Left colon (tissue), 2 donors: ENCODE measurements at regions of chr18 and their contacts with region 1.

Region 1: GRCh38 chr18:54224379-54225014 is at the start of gene MBD2:
- DNase-seq: peak; percentile 95 to 96
- ATAC-seq: peak; percentile 97
- total RNA-seq, gene MBD2: 109 to 115 TPM

Region 2: DNA sequence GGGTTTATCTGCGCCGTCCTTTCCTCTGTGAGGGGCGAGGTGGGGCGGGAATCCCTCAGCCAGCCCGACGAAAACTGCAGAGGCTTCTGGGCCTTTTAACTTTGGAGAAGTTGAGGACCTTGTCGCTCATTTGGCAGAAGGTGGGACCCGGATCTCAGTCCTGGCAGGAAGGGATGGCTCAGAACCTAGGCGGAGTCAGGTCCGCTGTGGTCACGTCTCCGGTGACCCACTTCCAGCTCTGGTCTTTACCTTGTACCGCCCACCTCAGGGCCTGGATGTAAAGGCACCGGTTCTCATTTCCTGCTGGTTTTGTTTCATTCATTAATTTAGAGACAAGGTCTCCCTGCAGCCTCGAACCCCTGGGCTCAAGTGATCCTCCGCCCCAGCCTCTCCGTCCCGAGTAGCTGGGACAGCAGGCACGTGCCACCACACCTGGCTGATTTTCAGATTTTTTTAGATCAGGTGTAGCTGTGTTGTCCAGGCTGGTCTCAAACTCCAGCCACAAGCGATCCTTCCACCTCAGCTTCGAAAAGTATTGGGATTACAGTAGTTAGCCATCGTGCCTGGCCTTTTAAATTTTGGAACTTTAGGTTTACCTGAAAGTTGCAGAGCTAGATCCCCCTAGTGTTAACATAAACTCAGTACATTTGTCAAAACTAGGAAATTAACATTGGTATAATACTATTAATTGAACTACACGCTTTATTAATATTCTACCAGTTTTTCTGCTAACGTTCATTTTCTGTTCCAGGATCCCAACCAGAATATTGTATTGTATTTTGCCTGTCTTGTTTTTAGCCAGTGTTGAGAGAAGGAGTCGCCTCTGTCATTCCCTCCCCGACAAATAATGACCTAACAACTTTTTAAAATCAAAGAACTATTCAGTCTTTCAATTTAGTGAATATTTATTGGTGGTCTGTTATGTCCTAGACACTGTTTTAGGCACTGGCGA is 45.7 kb after region 1 on chr18:
- intact Hi-C with region 1: loop called in 1 of 2 experiments (anchors 5 kb)
- DNase-seq: peak; percentile 61 to 66
- ATAC-seq: peak; percentile 42

Region 3: DNA sequence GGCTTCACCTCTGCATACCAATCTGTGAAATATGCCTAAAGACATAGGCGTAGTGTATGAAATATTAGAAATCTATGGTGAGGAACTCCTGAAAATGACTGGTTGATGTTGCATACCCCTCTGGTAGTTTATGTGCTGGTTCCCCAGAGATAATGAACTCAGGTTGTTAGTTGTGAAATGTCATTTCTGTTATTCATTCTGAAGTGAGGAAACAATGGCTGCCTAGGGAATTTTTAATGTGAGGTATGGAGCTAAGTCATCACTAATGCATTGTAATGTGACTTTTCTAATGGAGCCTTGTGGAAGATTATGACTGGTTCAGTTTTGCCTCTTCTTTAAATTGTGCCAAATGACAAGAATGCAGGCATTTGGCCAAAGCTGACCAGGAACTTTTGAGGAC is 542.1 kb after region 1 on chr18:
- intact Hi-C with region 1: no loop called
- DNase-seq: no peak
- ATAC-seq: no peak